ENCODE measurements at regions of chr9 and their contacts with region 1.

Region 1: GRCh38 chr9:69421908-69422801 is 97.1 kb downstream of the ENTREP1 start:
- DNase-seq: peak in 7 of 10 donors; percentile 48 to 93 (median 65)

Region 2: DNA sequence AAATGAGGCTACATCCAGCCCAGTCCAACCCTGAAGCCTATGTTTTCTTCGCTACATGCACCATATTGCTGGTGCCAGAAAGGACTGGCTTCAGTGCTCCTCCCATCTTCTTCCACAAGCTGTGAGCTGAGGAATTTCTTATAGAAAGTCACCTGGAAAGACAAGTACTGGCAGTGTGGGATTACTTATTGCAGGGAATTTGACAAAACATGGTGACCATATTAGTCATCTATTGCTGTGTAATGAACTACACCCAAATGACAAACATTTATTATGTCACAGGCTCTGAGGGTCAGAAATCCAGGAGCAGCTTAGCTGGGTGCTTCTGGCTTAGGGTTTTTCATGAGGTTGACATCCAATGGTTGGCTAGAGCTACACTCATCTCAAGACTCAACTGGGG is 21.7 kb before region 1 on chr9:
- intact Hi-C with region 1: no loop called
- DNase-seq: no peak

Region 3: GRCh38 chr9:69433392-69433791 is 11.2 kb after region 1 on chr9:
- intact Hi-C with region 1: no loop called
- DNase-seq: no peak

Region 4: DNA sequence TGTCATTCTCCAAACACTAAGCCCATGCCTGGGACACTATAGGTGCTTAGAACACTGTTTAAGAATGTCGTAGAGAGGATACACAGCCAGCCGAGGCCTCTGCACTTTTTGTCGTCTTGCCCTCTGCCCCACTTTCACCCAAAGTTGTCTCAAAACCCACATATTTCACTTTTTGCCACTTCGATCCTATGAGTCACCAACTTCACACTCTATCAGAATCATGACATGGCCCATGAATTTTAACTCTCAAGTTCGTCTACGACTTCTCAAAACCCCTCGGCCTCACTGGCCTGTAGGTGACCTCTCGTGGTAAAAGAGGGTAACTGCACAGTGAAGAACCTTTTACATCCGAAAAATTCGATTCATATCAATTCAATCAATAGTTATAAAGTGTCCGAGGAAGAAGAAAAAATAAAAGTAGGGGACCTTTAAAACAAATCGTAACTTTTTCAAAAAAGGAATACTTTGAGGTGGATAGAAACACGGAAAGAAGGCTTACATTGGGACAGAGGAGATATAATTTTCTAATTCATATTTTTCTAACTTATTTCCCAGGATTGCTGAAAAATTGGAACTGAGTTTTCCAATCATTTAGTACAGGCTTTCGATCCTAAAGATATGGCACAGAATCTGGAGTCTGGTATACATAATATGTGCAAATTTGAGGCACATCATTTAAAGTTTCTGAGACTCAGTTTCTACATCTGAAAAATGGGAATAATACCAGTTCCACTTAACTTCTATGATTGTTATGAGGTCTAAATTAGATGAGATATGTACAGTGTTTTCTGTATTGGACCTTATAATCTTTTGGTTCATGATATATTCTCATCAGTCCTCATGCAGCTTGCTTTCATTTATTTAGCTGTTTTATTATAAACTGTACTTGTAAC is 127.4 kb after region 1 on chr9:
- intact Hi-C with region 1: loop called (anchors 2 kb)
- DNase-seq: peak in 2 of 10 donors; percentile 43 to 83

Measured in posterior cingulate gyrus (tissue), 11 donors.